Heart left ventricle (tissue), 16 donors: ENCODE measurements at regions of chr2 and their contacts with region 1.

Region 1: DNA sequence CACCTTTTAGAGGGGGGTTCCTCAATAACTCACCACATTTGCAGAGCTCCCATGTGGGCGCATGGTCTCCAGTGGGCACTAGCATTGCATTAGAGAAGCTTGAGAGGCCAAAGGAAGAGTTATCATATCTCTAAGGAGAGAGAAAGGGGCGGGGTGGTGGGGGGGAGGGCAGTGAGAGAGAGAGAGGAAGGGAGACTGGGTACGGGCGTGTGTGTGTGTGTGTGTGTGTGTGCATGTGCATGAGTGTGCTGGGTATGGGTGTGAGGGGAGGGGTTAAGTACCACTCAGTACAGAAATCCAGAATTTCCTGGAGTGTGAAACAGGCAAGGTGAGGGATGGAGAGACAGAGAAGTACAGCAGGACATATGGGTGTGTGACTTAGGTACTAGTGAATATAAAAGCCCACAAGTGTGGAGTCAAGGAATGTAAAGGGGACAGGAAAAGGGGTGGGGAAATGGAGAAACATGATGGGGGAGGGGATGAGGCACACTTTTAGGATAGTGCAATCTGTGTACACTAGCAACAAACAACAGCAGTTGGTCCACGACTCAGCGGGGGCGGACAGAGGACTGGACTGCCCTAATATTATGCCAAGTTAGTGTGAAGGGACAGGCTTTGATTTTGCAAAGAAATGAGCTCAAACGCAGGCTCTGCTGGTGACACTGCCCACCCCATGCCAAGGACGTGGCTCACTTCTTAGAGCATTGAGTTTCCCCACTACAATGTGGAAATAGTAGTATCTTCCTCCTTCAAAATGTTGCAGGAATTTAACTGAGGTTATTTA is 91.3 kb downstream of the SPRED2 start:
- DNase-seq: no peak
- ATAC-seq: no peak
- H3K4me3 ChIP-seq: no peak overlapping the region
- H3K27ac ChIP-seq: no peak overlapping the region
- H3K4me1 ChIP-seq: peaks cover 0 to 14% (median 0%) of the 10 kb centered on the region in 12 donors
- H3K27me3 ChIP-seq: no peaks in the 10 kb centered on the region
- CTCF ChIP-seq: no peak
- POLR2A ChIP-seq: no peak

Region 2: DNA sequence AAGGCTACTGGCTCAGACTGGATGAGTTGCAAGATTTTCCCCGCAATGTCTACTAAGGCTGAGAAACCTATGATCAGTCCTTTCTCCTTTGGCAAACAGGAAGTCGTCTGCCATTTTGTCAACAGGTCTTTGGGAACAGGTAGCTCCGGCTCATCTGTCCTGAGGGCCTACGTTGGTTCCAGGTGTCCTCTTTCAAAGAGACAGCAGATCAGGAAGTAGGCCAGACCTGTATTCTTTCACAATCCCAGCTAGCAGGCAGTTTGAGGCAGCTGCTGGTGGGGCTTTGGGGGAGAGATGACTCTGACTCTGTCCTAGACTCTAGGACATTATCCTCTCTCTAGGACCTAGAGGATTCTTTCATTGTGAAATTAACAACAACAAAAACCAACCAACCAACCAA is 14.8 kb before region 1 on chr2:
- intact Hi-C with region 1: loop called in 1 of 10 experiments (anchors 2 kb)
- DNase-seq: no peak
- ATAC-seq: no peak
- H3K4me3 ChIP-seq: no peak overlapping the region
- H3K27ac ChIP-seq: no peak overlapping the region
- H3K4me1 ChIP-seq: peaks cover 0 to 3% (median 0%) of the 10 kb centered on the region in 12 donors
- H3K27me3 ChIP-seq: no peaks in the 10 kb centered on the region
- CTCF ChIP-seq: no peak
- POLR2A ChIP-seq: no peak

Region 3: GRCh38 chr2:65382776-65383357 is 41.8 kb after region 1 on chr2:
- intact Hi-C with region 1: loop called in 1 of 10 experiments (anchors 5 kb)
- DNase-seq: peak; percentile 80 to 88 (median 86)
- ATAC-seq: peak; percentile 43 to 82 (median 78)
- H3K4me3 ChIP-seq: peak overlapping the region in 8 of 12 donors; percentile 8 to 33 (median 22)
- H3K27ac ChIP-seq: peak overlapping the region; percentile 65 to 81 (median 71)
- H3K4me1 ChIP-seq: peaks cover 6 to 81% (median 59%) of the 10 kb centered on the region in 12 donors
- H3K27me3 ChIP-seq: no peaks in the 10 kb centered on the region
- CTCF ChIP-seq: peak in 3 of 12 donors; percentile 5 to 27 (median 6)
- POLR2A ChIP-seq: no peak